Left cardiac atrium (tissue), 4 donors: ENCODE measurements at regions of chr4 and their contacts with region 1.

Region 1: GRCh38 chr4:181578911-181579310 is 664.3 kb upstream of the TENM3 start:
- DNase-seq: no peak
- ATAC-seq: no peak

Region 2: GRCh38 chr4:182562350-182562749 is 983.4 kb after region 1 on chr4:
- intact Hi-C with region 1: no loop called
- DNase-seq: no peak
- ATAC-seq: no peak

Region 3: GRCh38 chr4:182925298-182925738 is 1346.4 kb after region 1 on chr4:
- intact Hi-C with region 1: loop called in 1 of 2 experiments (anchors 10 kb)
- DNase-seq: peak; percentile 41
- ATAC-seq: peak; percentile 80 to 88